Common myeloid progenitor, CD34-positive (primary cell): ENCODE measurements at regions of chr5 and their contacts with region 1.

Region 1: GRCh38 chr5:179749857-179750508 is 17.4 kb downstream of the MAML1 start:
- DNase-seq: no peak
- H3K4me3 ChIP-seq: no peak overlapping the region
- H3K27ac ChIP-seq: no peak overlapping the region
- H3K4me1 ChIP-seq: peaks cover 0 to 4% (median 0%) of the 10 kb centered on the region in 4 experiments
- H3K27me3 ChIP-seq: no peaks in the 10 kb centered on the region

Region 2: GRCh38 chr5:179608131-179608581 is 141.8 kb before region 1 on chr5:
- CTCF ChIA-PET with region 1: no interaction called
- POLR2A ChIA-PET with region 1: no interaction called
- DNase-seq: peak in 2 of 3 donors; percentile 47 to 51
- H3K4me3 ChIP-seq: no peak overlapping the region
- H3K27ac ChIP-seq: peak overlapping the region in 1 of 2 experiments; percentile 22
- H3K4me1 ChIP-seq: peaks cover 0 to 13% (median 5%) of the 10 kb centered on the region in 4 experiments
- H3K27me3 ChIP-seq: no peaks in the 10 kb centered on the region

Region 3: DNA sequence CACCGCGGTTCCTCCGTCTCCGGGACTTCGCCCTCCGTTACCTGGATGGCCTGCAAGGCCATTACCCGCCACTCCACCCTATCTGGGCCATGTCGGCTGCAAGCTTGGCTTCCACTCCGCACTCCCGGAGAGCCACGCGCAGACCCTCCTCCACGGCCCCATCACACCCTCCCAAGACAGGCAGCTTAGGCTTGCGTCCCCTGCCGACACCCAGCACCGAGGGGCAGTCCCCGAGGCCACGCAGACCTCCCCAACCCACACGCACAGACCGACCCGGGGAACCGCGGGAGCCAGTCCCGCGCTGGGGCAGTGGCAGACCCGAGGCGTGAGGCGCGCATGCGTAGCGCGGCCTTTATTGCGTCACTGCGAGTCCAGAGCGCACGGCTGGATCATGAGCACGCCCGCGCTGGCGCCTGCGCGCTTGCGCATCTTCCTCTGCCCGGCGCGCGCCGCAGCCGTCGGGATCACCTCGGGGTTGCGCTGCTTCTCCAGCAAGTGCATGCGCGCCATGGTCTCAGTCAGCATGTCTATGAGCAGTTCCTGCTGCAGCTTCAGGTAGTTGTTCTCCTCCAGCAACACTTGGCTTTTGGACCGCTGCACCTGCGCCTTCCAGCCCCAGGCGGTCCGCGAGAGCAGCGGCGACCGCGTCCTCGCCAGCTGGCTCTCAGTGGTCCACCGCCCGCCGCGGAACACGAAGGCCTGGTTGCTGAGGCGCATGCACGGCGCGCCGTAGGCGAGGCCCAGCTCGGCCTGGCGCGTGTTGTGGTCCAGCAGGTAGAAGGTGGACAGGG is 71.6 kb before region 1 on chr5:
- CTCF ChIA-PET with region 1: no interaction called
- POLR2A ChIA-PET with region 1: no interaction called
- DNase-seq: peak; percentile 96 to 98 (median 97)
- H3K4me3 ChIP-seq: peak overlapping the region; percentile 48 to 98 (median 85)
- H3K27ac ChIP-seq: peak overlapping the region; percentile 68 to 87
- H3K4me1 ChIP-seq: peaks cover 0 to 34% (median 27%) of the 10 kb centered on the region in 4 experiments
- H3K27me3 ChIP-seq: no peaks in the 10 kb centered on the region

Region 4: GRCh38 chr5:179700401-179700918 is 49.5 kb before region 1 on chr5:
- CTCF ChIA-PET with region 1: no interaction called
- POLR2A ChIA-PET with region 1: no interaction called
- DNase-seq: peak; percentile 23 to 60 (median 42)
- H3K4me3 ChIP-seq: peak overlapping the region in 5 of 7 experiments; percentile 86 to 100 (median 88)
- H3K27ac ChIP-seq: peak overlapping the region; percentile 99 to 100
- H3K4me1 ChIP-seq: peaks cover 7 to 43% (median 32%) of the 10 kb centered on the region in 4 experiments
- H3K27me3 ChIP-seq: no peaks in the 10 kb centered on the region

Region 5: DNA sequence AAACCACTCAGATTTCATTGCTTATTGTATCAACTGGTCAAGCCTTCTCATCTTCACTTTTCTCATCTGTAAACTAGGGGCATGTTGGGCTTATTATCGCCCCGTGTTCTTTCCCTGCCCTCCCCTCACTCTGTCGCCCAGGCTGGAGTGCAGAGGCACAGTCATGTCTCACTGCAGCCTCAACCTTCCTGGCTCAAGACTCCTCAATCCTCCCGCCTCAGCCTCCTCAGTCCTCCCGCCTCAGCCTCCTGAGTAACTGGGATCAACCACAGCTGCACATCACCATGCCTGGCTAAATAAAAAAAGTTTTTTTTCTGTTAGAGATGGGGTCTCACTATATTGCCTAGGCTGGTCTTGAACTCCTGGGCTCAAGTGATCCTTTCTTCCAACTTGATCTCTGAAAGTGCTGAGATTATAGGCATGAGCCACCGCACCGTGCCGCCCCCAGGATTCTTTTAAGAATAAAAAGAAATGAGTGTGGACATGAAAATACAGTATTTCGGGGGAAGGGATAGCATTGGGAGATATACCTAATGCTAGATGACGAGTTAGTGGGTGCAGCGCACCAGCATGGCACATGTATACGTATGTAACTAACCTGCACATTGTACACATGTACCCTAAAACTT is 15.3 kb before region 1 on chr5:
- CTCF ChIA-PET with region 1: interaction called, 10 read pairs
- POLR2A ChIA-PET with region 1: interaction called, 3 read pairs
- DNase-seq: no peak
- H3K4me3 ChIP-seq: peak overlapping the region in 5 of 7 experiments; percentile 78 to 96 (median 94)
- H3K27ac ChIP-seq: peak overlapping the region in 1 of 2 experiments; percentile 93
- H3K4me1 ChIP-seq: peaks cover 14 to 29% (median 23%) of the 10 kb centered on the region in 4 experiments
- H3K27me3 ChIP-seq: no peaks in the 10 kb centered on the region

Region 6: GRCh38 chr5:179858586-179859427 is 108.8 kb after region 1 on chr5 and contains the start of gene MRNIP:
- CTCF ChIA-PET with region 1: no interaction called
- POLR2A ChIA-PET with region 1: no interaction called
- DNase-seq: peak; percentile 90 to 94 (median 93)
- H3K4me3 ChIP-seq: peak within 1 kb of the TSS; percentile 87 to 98 (median 95)
- H3K27ac ChIP-seq: peak within 1 kb of the TSS in 1 of 2 experiments; percentile 68
- H3K4me1 ChIP-seq: peaks cover 3 to 16% (median 10%) of the 10 kb centered on the region in 4 experiments
- H3K27me3 ChIP-seq: no peaks in the 10 kb centered on the region